ENCODE measurements at regions of chr4 and their contacts with region 1.

Region 1: GRCh38 chr4:184538023-184538599 is 63.8 kb upstream of the IRF2 start:
- DNase-seq: peak; percentile 91 to 97
- H3K4me3 ChIP-seq: peak overlapping the region; percentile 2
- CTCF ChIP-seq: peak in 1 of 3 donors; percentile 68
- POLR2A ChIP-seq: no peak

Region 2: GRCh38 chr4:184267673-184268583 is 270.2 kb before region 1 on chr4:
- intact Hi-C with region 1: loop called (anchors 5 kb)
- DNase-seq: peak; percentile 41 to 83
- H3K4me3 ChIP-seq: no peak overlapping the region
- CTCF ChIP-seq: no peak
- POLR2A ChIP-seq: no peak

Region 3: GRCh38 chr4:184474263-184475095 is 63.6 kb before region 1 on chr4 and contains the start of gene IRF2:
- intact Hi-C with region 1: loop called (anchors 5 kb)
- DNase-seq: peak; percentile 96 to 99
- H3K4me3 ChIP-seq: peak within 1 kb of the TSS; percentile 95
- CTCF ChIP-seq: no peak
- POLR2A ChIP-seq: peak in 1 of 2 donors; percentile 87
- total RNA-seq, gene IRF2: 31.6 to 44.0 (median 38.4) TPM